Mucosa of descending colon (tissue), 3 donors: ENCODE measurements at regions of chr5 and their contacts with region 1.

Region 1: DNA sequence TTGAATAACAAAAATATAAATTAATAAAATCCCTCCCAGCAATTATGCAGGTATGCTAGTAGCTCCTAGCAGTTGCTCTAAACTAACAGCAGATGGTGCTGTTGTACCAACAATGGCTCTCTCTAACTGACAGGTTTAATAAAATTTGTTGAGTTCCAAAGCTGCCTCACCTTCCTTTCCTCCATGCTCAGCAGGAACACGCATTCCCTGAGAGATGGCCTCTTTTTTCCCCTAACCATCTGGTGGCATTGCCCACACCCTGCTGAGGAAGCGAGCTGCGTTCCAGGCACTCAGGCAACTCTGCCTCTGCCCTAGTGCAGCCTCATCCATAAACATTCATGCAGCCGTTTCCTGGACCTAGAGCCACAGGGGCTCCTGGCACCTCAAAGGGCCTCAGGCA is 106.2 kb downstream of the KLHL3 start:
- DNase-seq: peak in 1 of 3 donors; percentile 40
- ATAC-seq: peak; percentile 84
- H3K4me3 ChIP-seq: no peak overlapping the region
- H3K4me1 ChIP-seq: no peaks in the 10 kb centered on the region
- CTCF ChIP-seq: peak; percentile 70

Region 2: GRCh38 chr5:137735555-137736284 is 106.1 kb after region 1 on chr5 and contains the start of gene KLHL3:
- intact Hi-C with region 1: loop called (anchors 5 to 10 kb)
- DNase-seq: peak; percentile 39 to 66 (median 63)
- ATAC-seq: peak; percentile 63
- H3K4me3 ChIP-seq: no peak within 1 kb of the TSS
- H3K4me1 ChIP-seq: peaks cover 8% of the 10 kb centered on the region
- CTCF ChIP-seq: no peak
- total RNA-seq, gene KLHL3: 4.2 to 6.7 (median 5.4) TPM

Region 3: DNA sequence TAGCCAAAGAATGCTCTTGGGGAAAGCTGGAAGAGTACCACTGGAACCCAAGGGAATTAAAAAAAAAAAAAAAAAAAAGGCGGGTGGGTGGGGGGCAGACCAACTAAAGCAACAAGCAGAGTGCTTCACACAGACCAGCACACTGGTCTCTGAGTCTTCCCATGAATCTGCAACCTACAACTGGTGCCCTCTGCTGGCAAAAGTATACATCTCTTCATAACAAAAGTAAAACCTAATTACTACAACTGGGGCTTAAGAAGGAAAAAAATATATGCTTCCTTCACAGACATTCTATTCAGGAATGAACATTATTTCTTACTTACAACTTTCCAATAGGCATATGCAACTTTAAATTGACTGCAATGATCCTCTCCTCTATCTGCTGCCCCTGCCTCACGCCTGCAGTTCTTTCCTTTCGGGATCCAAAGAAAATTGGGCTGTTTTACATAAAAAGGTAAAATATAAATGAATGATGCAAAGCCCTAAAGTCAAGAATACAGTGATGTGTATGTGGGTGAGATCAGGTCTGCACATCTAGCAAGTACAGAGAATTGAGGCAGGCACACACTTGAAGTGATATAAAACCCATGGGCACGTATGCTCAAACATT is 113.5 kb after region 1 on chr5:
- intact Hi-C with region 1: loop called (anchors 5 to 10 kb)
- DNase-seq: peak in 1 of 3 donors; percentile 73
- ATAC-seq: peak; percentile 87
- H3K4me3 ChIP-seq: no peak overlapping the region
- H3K4me1 ChIP-seq: no peaks in the 10 kb centered on the region
- CTCF ChIP-seq: peak; percentile 20